CD4-positive, alpha-beta T cell (primary cell): ENCODE measurements at regions of chr4 and their contacts with region 1.

Region 1: DNA sequence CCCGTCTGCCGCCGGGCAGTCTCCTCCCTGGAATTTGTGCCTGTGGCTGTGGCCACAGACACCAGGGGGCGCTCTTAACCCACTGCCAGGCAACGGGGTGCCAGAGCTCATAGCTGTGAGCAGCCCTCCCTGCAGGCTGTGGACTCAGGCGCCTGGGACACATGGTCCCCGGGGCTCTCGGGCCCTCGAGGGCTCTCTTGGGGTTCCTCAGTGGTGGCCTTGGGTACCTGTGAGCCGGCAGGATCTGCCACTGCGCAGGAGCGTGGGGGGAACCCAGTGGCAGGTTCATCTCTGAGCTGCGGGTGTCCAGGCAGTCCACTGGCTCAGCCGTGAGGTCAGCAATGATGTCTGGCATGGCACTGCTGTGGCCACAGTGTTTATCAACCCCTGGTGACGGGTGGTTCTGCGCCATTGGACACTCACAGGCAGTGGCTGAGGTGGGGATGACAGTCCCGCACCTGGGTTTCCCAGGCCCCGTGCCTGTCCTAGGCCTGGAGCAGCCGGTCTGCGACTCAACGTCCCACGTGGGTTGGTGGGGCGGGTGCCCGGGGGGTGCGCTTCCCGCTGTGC is 37.2 kb downstream of the PCGF3 start:
- DNase-seq: peak; percentile 62 to 84 (median 74)
- ATAC-seq: peak; percentile 83
- H3K4me3 ChIP-seq: no peak overlapping the region
- H3K4me3 Mint-ChIP-seq: no peak overlapping the region
- H3K27ac ChIP-seq: no peak overlapping the region
- H3K27ac Mint-ChIP-seq: no peak overlapping the region
- H3K4me1 ChIP-seq: peaks cover 6% of the 10 kb centered on the region
- H3K4me1 Mint-ChIP-seq: no peaks in the 10 kb centered on the region
- H3K27me3 ChIP-seq: no peaks in the 10 kb centered on the region
- H3K27me3 Mint-ChIP-seq: no peaks in the 10 kb centered on the region
- CTCF ChIP-seq: peak; percentile 88

Region 2: DNA sequence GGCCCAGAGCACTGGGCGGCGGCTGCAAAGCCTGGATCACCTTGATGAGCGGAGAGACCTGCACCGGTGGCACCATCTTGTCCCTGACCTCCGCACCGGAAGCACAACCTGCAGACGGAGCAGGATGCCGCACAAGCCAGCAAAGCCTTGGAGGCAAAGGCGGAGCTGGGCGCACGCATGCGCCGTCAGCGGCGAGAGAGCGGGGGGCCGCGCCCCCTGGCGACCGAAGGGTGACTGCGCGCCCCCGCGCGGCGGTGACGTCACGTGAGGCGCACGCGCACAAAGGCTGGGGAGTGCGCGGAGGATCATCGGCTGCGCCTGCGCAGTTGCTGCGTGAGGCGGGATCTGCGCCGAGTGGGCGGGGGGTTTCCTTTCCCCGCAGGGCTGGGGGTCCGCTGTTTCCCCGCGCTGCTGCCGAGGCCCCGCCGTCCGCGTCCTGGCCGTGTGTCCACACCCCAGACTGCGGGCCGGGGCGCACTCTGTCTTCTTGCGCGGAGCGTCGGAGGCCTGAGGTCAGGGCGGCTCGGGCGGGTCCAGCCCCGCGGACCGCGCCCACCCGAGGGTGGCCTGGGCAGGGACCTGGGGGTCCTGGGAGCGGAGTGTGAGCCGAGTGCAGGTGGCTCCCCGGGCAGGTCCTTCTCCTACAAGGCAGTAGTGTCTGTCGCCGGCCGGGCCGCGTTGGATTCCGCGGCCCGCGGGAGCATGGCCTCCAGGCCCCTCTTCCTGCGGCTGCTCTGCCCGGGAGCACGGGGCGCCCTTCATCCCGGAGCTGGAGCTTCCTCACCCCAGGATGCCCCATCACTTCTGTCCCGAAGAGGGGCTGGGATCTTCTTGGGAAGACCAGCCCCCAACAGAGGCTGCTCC is 68.4 kb before region 1 on chr4 and contains the starts of genes ATP5ME and MYL5:
- CTCF ChIA-PET with region 1: no interaction called
- POLR2A ChIA-PET with region 1: no interaction called
- intact Hi-C with region 1: no loop called
- DNase-seq: peak; percentile 96 to 99 (median 97)
- ATAC-seq: peak; percentile 91
- H3K4me3 ChIP-seq: peak within 1 kb of the TSS; percentile 88
- H3K4me3 Mint-ChIP-seq: peak within 1 kb of the TSS; percentile 96
- H3K27ac ChIP-seq: peak within 1 kb of the TSS; percentile 85 to 98
- H3K27ac Mint-ChIP-seq: peak within 1 kb of the TSS; percentile 87
- H3K4me1 ChIP-seq: peaks cover 21% of the 10 kb centered on the region
- H3K4me1 Mint-ChIP-seq: peaks cover 4% of the 10 kb centered on the region
- H3K27me3 ChIP-seq: no peaks in the 10 kb centered on the region
- H3K27me3 Mint-ChIP-seq: no peaks in the 10 kb centered on the region
- CTCF ChIP-seq: peak; percentile 90
- total RNA-seq, gene ATP5ME: 109 to 126 TPM
- total RNA-seq, gene MYL5: 25.3 to 29.2 TPM

Region 3: GRCh38 chr4:687048-687970 is 55.5 kb before region 1 on chr4:
- CTCF ChIA-PET with region 1: no interaction called
- POLR2A ChIA-PET with region 1: no interaction called
- intact Hi-C with region 1: no loop called
- DNase-seq: peak in 2 of 14 experiments; percentile 66 to 77
- ATAC-seq: no peak
- H3K4me3 ChIP-seq: no peak overlapping the region
- H3K4me3 Mint-ChIP-seq: no peak overlapping the region
- H3K27ac ChIP-seq: no peak overlapping the region
- H3K27ac Mint-ChIP-seq: no peak overlapping the region
- H3K4me1 ChIP-seq: peaks cover 21% of the 10 kb centered on the region
- H3K4me1 Mint-ChIP-seq: no peaks in the 10 kb centered on the region
- H3K27me3 ChIP-seq: peaks cover 6 to 17% of the 10 kb centered on the region in 2 experiments
- H3K27me3 Mint-ChIP-seq: peaks cover 26% of the 10 kb centered on the region
- CTCF ChIP-seq: no peak

Region 4: GRCh38 chr4:825238-825835 is 82.5 kb after region 1 on chr4:
- CTCF ChIA-PET with region 1: no interaction called
- POLR2A ChIA-PET with region 1: no interaction called
- intact Hi-C with region 1: no loop called
- DNase-seq: peak in 11 of 14 experiments; percentile 7 to 70 (median 31)
- ATAC-seq: peak; percentile 80
- H3K4me3 ChIP-seq: no peak overlapping the region
- H3K4me3 Mint-ChIP-seq: no peak overlapping the region
- H3K27ac ChIP-seq: no peak overlapping the region
- H3K27ac Mint-ChIP-seq: no peak overlapping the region
- H3K4me1 ChIP-seq: peaks cover 19% of the 10 kb centered on the region
- H3K4me1 Mint-ChIP-seq: peaks cover 6% of the 10 kb centered on the region
- H3K27me3 ChIP-seq: peaks cover 52 to 69% of the 10 kb centered on the region in 2 experiments
- H3K27me3 Mint-ChIP-seq: peaks cover 66% of the 10 kb centered on the region
- CTCF ChIP-seq: no peak

Region 5: DNA sequence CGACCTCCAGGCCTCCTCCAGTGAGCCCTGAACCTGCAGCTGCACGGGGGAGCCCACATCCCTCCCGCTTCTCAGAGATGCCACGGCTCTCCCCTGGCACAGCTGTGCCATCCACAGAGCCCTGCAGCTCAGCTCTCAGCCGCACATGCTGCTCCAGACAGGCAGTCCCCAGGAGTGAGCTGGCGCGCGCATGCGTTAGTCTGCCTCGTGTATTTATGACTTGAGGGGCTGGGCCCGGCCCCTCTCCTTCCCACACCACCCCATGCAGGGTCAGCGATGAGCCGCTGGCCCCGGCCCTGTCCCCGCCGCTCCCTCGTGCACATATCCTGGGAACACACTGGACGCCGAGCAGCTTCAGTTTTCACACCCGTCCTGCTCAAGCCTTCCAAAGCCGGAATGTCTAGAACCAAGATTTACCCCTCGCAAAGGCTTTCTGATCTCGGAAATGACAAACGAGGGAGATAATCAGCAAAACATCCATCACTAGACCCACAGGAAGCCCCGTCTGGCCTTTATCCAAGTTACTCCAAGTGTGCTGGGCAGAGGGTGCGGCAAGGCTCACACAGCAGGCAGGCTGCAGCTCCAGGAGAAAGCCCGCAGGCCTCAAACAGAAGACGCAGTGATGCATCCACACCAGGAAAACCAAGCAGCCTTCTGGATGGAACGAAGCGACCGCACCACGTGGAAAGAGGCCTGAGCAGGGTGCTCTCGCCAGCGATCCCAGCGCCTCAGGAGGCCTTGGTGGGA is 165.0 kb after region 1 on chr4:
- CTCF ChIA-PET with region 1: no interaction called
- POLR2A ChIA-PET with region 1: no interaction called
- intact Hi-C with region 1: no loop called
- DNase-seq: no peak
- ATAC-seq: no peak
- H3K4me3 ChIP-seq: no peak overlapping the region
- H3K4me3 Mint-ChIP-seq: no peak overlapping the region
- H3K27ac ChIP-seq: no peak overlapping the region
- H3K27ac Mint-ChIP-seq: no peak overlapping the region
- H3K4me1 ChIP-seq: no peaks in the 10 kb centered on the region
- H3K4me1 Mint-ChIP-seq: peaks cover under 1% of the 10 kb centered on the region
- H3K27me3 ChIP-seq: no peaks in the 10 kb centered on the region
- H3K27me3 Mint-ChIP-seq: no peaks in the 10 kb centered on the region
- CTCF ChIP-seq: no peak

Region 6: GRCh38 chr4:986879-987623 is 244.2 kb after region 1 on chr4 and contains the start of gene IDUA:
- CTCF ChIA-PET with region 1: interaction called, 11 read pairs
- POLR2A ChIA-PET with region 1: interaction called, 3 read pairs
- intact Hi-C with region 1: loop called (anchors 2 kb)
- DNase-seq: peak; percentile 73 to 93 (median 86)
- ATAC-seq: peak; percentile 84
- H3K4me3 ChIP-seq: peak within 1 kb of the TSS; percentile 78
- H3K4me3 Mint-ChIP-seq: peak within 1 kb of the TSS; percentile 94
- H3K27ac ChIP-seq: peak within 1 kb of the TSS; percentile 41 to 46
- H3K27ac Mint-ChIP-seq: peak within 1 kb of the TSS; percentile 82
- H3K4me1 ChIP-seq: peaks cover 36% of the 10 kb centered on the region
- H3K4me1 Mint-ChIP-seq: peaks cover 25% of the 10 kb centered on the region
- H3K27me3 ChIP-seq: no peaks in the 10 kb centered on the region
- H3K27me3 Mint-ChIP-seq: no peaks in the 10 kb centered on the region
- CTCF ChIP-seq: peak; percentile 57
- total RNA-seq, gene IDUA: 70.2 to 77.8 TPM